T-cell (primary cell): ENCODE measurements at regions of chr17 and their contacts with region 1.

Region 1: GRCh38 chr17:16178836-16179235 is 36.5 kb downstream of the NCOR1 start:
- DNase-seq: no peak
- ATAC-seq: no peak
- H3K4me3 ChIP-seq: no peak overlapping the region
- H3K4me3 Mint-ChIP-seq: no peak overlapping the region
- H3K27ac ChIP-seq: no peak overlapping the region
- H3K27ac Mint-ChIP-seq: no peak overlapping the region
- H3K4me1 ChIP-seq: peaks cover 0 to 3% of the 10 kb centered on the region in 2 experiments
- H3K4me1 Mint-ChIP-seq: peaks cover 33 to 47% (median 46%) of the 10 kb centered on the region in 3 donors
- H3K27me3 ChIP-seq: no peaks in the 10 kb centered on the region
- H3K27me3 Mint-ChIP-seq: no peaks in the 10 kb centered on the region

Region 2: GRCh38 chr17:16189791-16190348 is 11.0 kb after region 1 on chr17:
- CTCF ChIA-PET with region 1: interaction called in 1 of 2 experiments, 10 read pairs
- POLR2A ChIA-PET with region 1: no interaction called
- DNase-seq: no peak
- ATAC-seq: no peak
- H3K4me3 ChIP-seq: no peak overlapping the region
- H3K4me3 Mint-ChIP-seq: no peak overlapping the region
- H3K27ac ChIP-seq: no peak overlapping the region
- H3K27ac Mint-ChIP-seq: no peak overlapping the region
- H3K4me1 ChIP-seq: no peaks in the 10 kb centered on the region
- H3K4me1 Mint-ChIP-seq: peaks cover 27 to 47% (median 35%) of the 10 kb centered on the region in 3 donors
- H3K27me3 ChIP-seq: no peaks in the 10 kb centered on the region
- H3K27me3 Mint-ChIP-seq: no peaks in the 10 kb centered on the region